ENCODE measurements at regions of chr1 and their contacts with region 1.

Region 1: GRCh38 chr1:50929376-50929958 is 30.6 kb downstream of the FAF1 start:
- DNase-seq: peak; percentile 12
- H3K4me3 ChIP-seq: no peak overlapping the region
- H3K27ac ChIP-seq: no peak overlapping the region
- H3K4me1 ChIP-seq: no peaks in the 10 kb centered on the region
- H3K27me3 ChIP-seq: no peaks in the 10 kb centered on the region
- CTCF ChIP-seq: peak; percentile 49 to 54

Region 2: GRCh38 chr1:50155541-50155940 is 773.9 kb before region 1 on chr1:
- CTCF ChIA-PET with region 1: no interaction called
- dilution Hi-C with region 1: no loop called
- in situ Hi-C with region 1: no loop called
- intact Hi-C with region 1: no loop called
- DNase-seq: peak; percentile 9
- H3K4me3 ChIP-seq: no peak overlapping the region
- H3K27ac ChIP-seq: no peak overlapping the region
- H3K4me1 ChIP-seq: peaks cover 6% of the 10 kb centered on the region
- H3K27me3 ChIP-seq: no peaks in the 10 kb centered on the region
- CTCF ChIP-seq: no peak

Region 3: GRCh38 chr1:50959913-50960844 is 30.7 kb after region 1 on chr1 and contains the start of gene FAF1:
- CTCF ChIA-PET with region 1: no interaction called
- dilution Hi-C with region 1: no loop called
- in situ Hi-C with region 1: no loop called
- intact Hi-C with region 1: loop called (anchors 2 kb)
- DNase-seq: peak; percentile 98
- H3K4me3 ChIP-seq: peak within 1 kb of the TSS; percentile 71 to 92 (median 87)
- H3K27ac ChIP-seq: peak within 1 kb of the TSS; percentile 70
- H3K4me1 ChIP-seq: peaks cover under 1% of the 10 kb centered on the region
- H3K27me3 ChIP-seq: no peaks in the 10 kb centered on the region
- CTCF ChIP-seq: peak; percentile 30 to 44
- total RNA-seq, gene FAF1: 56.3 to 72.8 TPM

Region 4: GRCh38 chr1:50968158-50968820 is 38.8 kb after region 1 on chr1:
- CTCF ChIA-PET with region 1: no interaction called
- dilution Hi-C with region 1: no loop called
- in situ Hi-C with region 1: no loop called
- intact Hi-C with region 1: loop called (anchors 2 kb)
- DNase-seq: peak; percentile 90
- H3K4me3 ChIP-seq: peak overlapping the region; percentile 89 to 92 (median 90)
- H3K27ac ChIP-seq: peak overlapping the region; percentile 74
- H3K4me1 ChIP-seq: peaks cover 9% of the 10 kb centered on the region
- H3K27me3 ChIP-seq: no peaks in the 10 kb centered on the region
- CTCF ChIP-seq: peak in 1 of 2 donors; percentile 46

Region 5: GRCh38 chr1:51044834-51045233 is 115.4 kb after region 1 on chr1:
- CTCF ChIA-PET with region 1: no interaction called
- dilution Hi-C with region 1: no loop called
- in situ Hi-C with region 1: no loop called
- intact Hi-C with region 1: loop called (anchors 5 kb)
- DNase-seq: no peak
- H3K4me3 ChIP-seq: no peak overlapping the region
- H3K27ac ChIP-seq: no peak overlapping the region
- H3K4me1 ChIP-seq: no peaks in the 10 kb centered on the region
- H3K27me3 ChIP-seq: no peaks in the 10 kb centered on the region
- CTCF ChIP-seq: peak in 1 of 2 donors; percentile 34

Region 6: DNA sequence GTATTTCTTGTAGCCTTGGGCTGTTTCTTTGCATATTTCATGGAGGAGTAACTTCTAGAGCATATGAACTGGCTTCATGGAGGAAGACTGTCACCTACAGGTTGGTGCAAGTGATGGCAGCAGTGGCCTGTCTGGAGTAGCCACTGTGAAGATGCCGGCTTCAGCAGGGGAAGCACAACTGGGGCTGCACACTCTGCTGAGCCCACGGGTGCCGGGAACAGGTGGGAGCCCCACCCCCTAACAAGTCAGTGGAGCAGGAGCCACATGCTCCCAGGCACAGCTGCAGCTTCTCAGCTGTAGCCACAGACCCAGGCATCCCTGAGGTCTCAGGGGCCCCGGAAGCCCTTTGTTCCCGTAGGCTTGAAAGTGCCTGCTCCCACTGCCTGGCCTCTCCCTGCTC is 129.4 kb after region 1 on chr1:
- CTCF ChIA-PET with region 1: no interaction called
- dilution Hi-C with region 1: no loop called
- in situ Hi-C with region 1: no loop called
- intact Hi-C with region 1: loop called (anchors 2 kb)
- DNase-seq: peak; percentile 10
- H3K4me3 ChIP-seq: no peak overlapping the region
- H3K27ac ChIP-seq: no peak overlapping the region
- H3K4me1 ChIP-seq: peaks cover 30% of the 10 kb centered on the region
- H3K27me3 ChIP-seq: no peaks in the 10 kb centered on the region
- CTCF ChIP-seq: peak; percentile 50 to 61

Region 7: DNA sequence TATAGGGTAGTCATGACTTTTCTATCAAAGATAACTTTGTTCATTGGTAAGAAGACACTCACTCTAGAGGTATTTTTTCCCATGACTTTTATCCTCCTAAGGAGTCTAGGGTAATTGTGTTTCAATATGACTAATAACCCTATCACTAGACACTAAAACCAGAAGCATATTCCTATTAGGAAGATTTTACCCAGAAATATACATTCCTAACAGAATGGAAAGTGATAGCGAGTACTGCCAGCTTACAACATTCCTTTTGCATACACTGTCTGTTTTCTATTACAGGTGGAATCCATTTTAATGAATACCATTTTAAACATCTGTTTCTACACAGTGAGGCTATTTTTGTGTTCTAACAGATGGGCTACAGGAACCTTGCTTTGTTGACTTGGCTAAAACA is 141.2 kb after region 1 on chr1:
- CTCF ChIA-PET with region 1: no interaction called
- dilution Hi-C with region 1: no loop called
- in situ Hi-C with region 1: no loop called
- intact Hi-C with region 1: no loop called
- DNase-seq: peak; percentile 74
- H3K4me3 ChIP-seq: no peak overlapping the region
- H3K27ac ChIP-seq: peak overlapping the region; percentile 5
- H3K4me1 ChIP-seq: peaks cover 19% of the 10 kb centered on the region
- H3K27me3 ChIP-seq: no peaks in the 10 kb centered on the region
- CTCF ChIP-seq: no peak

Region 8: DNA sequence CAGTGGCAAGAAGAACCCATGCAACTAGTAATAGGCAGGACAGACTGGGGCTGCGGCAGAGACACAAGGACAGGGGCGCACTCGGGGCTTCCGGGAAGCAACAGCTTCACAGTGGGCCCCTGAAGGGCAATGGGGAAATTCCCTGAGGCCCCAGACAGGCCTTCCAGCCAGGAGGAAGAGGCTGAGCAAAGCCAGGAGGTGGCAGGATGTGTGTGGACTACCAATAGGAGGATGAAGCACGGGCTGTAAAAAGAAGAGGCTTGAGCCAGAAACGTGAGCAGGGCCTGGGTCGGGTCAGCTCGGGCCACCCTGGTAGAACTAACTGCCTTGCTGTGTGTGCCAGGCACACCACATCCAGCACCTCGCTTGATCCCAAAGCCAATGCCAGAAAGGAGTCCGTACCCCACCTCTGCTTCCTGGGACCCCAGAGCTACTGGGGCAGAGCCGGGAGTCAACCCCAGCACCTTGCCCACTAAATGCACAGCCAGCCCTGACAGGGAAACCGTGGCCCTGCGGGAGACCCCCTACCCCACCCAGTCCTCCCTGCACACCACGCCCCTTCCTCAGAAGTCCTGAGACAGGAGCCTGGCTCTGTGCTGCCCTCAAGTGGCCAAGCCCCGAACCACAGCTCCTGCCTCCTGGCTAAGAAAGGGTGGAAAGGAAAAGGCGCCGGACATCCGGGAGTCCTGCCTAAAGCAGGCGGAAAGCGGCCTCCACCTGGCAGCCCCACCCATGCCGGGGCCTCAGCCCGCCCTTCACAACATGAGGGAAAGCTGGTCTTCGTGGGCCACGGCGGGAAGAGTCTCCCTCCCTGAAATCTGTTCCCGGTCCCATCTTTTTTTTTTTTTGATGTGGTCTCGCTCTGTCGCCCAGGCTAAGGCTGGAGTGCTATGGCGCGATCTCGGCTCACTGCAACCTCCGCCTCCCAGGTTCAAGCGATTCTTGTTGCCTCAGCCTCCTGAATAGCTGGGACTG is 367.2 kb after region 1 on chr1:
- CTCF ChIA-PET with region 1: no interaction called
- dilution Hi-C with region 1: no loop called
- in situ Hi-C with region 1: no loop called
- intact Hi-C with region 1: loop called (anchors 10 kb)
- DNase-seq: peak; percentile 62
- H3K4me3 ChIP-seq: peak overlapping the region in 1 of 3 experiments; percentile 28
- H3K27ac ChIP-seq: no peak overlapping the region
- H3K4me1 ChIP-seq: peaks cover 7% of the 10 kb centered on the region
- H3K27me3 ChIP-seq: no peaks in the 10 kb centered on the region
- CTCF ChIP-seq: peak; percentile 89 to 98

Measured in mammary epithelial cell (primary cell).